ENCODE measurements at regions of chr15 and their contacts with region 1.

Region 1: DNA sequence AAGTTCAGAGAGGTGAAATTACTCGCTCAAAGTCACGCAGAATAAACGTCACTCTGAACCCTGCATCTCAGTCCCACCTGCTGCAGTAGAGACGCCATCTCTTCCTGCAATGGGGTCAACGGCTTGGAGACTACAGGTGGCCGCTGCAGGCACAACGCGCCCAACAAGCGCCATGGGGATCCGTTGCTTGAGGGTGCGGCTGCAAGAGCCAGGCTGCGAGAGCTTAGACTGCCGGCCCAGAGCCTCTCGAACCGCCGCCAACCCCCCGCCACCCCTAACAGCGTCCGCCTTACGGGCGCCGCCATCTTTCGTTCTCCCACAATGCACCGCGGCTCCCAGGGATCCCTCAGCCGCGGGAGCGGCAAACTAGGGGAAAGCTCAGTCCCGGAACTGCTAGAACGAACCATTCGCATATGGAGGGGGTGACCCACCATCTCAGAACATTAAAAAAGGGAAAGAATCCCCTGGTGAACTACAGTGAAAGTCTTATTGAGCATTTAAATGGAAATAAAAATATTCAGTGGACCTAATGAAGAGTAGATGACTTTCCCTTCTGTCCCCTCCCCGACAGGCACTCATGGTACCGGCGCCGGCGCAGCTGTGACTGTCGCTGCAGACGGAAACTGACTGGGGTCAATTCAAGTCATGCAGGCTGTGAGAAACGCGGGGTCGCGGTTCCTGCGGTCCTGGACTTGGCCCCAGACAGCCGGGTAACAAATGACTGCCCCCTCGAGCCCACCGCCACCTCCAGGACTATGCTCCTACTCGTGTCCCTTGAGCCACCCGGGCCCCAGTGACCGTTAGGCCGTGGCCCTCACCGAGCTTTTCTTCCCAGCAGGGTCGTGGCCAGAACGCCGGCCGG is at the starts of genes MRPL46 and MRPS11:
- DNase-seq: peak; percentile 89 to 93 (median 90)
- H3K4me3 ChIP-seq: peak within 1 kb of the TSS; percentile 87 to 90
- H3K4me3 Mint-ChIP-seq: peak within 1 kb of the TSS; percentile 96 to 99 (median 98)
- H3K27ac ChIP-seq: peak within 1 kb of the TSS; percentile 93
- H3K27ac Mint-ChIP-seq: peak within 1 kb of the TSS; percentile 98 to 100 (median 99)
- H3K4me1 ChIP-seq: peaks cover 29% of the 10 kb centered on the region
- H3K4me1 Mint-ChIP-seq: peaks cover 15 to 38% (median 30%) of the 10 kb centered on the region in 4 donors
- H3K27me3 ChIP-seq: no peaks in the 10 kb centered on the region
- H3K27me3 Mint-ChIP-seq: no peaks in the 10 kb centered on the region
- total RNA-seq, gene MRPL46: 25.9 to 28.7 TPM
- total RNA-seq, gene MRPS11: 27.5 to 35.0 TPM

Region 2: GRCh38 chr15:88454867-88455810 is 12.2 kb before region 1 on chr15:
- CTCF ChIA-PET with region 1: interaction called, 10 read pairs
- POLR2A ChIA-PET with region 1: interaction called, 11 read pairs
- intact Hi-C with region 1: no loop called
- DNase-seq: peak in 3 of 5 donors; percentile 18 to 20 (median 20)
- H3K4me3 ChIP-seq: no peak overlapping the region
- H3K4me3 Mint-ChIP-seq: no peak overlapping the region
- H3K27ac ChIP-seq: no peak overlapping the region
- H3K27ac Mint-ChIP-seq: peak overlapping the region in 1 of 7 donors; percentile 37
- H3K4me1 ChIP-seq: peaks cover 7% of the 10 kb centered on the region
- H3K4me1 Mint-ChIP-seq: peaks cover 0 to 1% (median under 1%) of the 10 kb centered on the region in 4 donors
- H3K27me3 ChIP-seq: no peaks in the 10 kb centered on the region
- H3K27me3 Mint-ChIP-seq: peaks cover 0 to under 1% of the 10 kb centered on the region in 2 donors

Region 3: GRCh38 chr15:88546248-88547129 is 79.2 kb after region 1 on chr15 and contains the start of gene DET1:
- CTCF ChIA-PET with region 1: no interaction called
- POLR2A ChIA-PET with region 1: no interaction called
- intact Hi-C with region 1: loop called (anchors 1 kb)
- DNase-seq: peak; percentile 92 to 97 (median 94)
- H3K4me3 ChIP-seq: peak within 1 kb of the TSS; percentile 34 to 63
- H3K4me3 Mint-ChIP-seq: peak within 1 kb of the TSS; percentile 92 to 95 (median 92)
- H3K27ac ChIP-seq: peak within 1 kb of the TSS; percentile 62
- H3K27ac Mint-ChIP-seq: peak within 1 kb of the TSS; percentile 86 to 97 (median 97)
- H3K4me1 ChIP-seq: peaks cover 9% of the 10 kb centered on the region
- H3K4me1 Mint-ChIP-seq: peaks cover 4 to 23% (median 8%) of the 10 kb centered on the region in 4 donors
- H3K27me3 ChIP-seq: no peaks in the 10 kb centered on the region
- H3K27me3 Mint-ChIP-seq: no peaks in the 10 kb centered on the region
- total RNA-seq, gene DET1: 11.5 to 11.7 TPM

Region 4: DNA sequence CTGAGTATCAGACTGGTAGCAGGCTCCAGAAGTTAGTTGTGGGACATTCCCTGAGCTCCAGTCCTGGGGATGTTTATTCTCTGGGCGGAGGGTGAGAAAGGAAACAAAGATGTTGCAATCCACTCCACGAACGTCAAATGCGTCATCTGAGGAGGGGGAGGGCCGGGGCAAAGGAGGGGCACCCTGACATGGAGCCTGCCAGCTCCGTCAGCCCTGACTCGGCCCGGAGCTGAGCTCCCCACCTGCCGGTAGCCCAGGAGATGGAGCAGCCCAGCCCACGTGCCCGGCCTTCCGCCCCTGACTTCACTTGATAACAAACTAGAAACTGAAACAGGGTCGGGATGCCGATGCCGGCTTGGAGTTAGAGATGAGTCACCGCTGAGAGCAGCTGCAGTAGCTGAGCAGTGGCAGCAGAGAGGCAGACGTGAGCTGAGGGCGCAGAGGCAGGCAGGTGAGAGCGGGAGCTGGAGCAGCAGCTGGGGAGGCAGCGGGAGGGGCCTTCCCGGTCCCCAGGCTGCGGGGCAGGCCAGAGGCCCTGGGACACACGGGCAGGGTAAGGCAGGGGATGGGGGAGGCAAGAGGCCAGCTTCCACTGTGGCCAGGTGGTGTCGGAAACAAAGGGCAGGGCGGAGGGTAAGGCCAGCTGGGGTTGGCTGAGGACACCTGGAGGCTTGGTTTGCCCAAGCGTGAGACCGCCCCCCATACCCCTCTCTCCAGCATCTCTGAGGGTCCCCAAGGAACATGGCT is 171.5 kb after region 1 on chr15 and contains the start of gene ISG20:
- CTCF ChIA-PET with region 1: interaction called, 3 read pairs
- POLR2A ChIA-PET with region 1: interaction called, 18 read pairs
- intact Hi-C with region 1: loop called (anchors 1 kb)
- DNase-seq: peak; percentile 97 to 100 (median 99)
- H3K4me3 ChIP-seq: peak within 1 kb of the TSS; percentile 55 to 94
- H3K4me3 Mint-ChIP-seq: peak within 1 kb of the TSS; percentile 88 to 98 (median 95)
- H3K27ac ChIP-seq: peak within 1 kb of the TSS; percentile 100
- H3K27ac Mint-ChIP-seq: peak within 1 kb of the TSS; percentile 89 to 100 (median 99)
- H3K4me1 ChIP-seq: peaks cover 96% of the 10 kb centered on the region
- H3K4me1 Mint-ChIP-seq: peaks cover 55 to 86% (median 74%) of the 10 kb centered on the region in 4 donors
- H3K27me3 ChIP-seq: no peaks in the 10 kb centered on the region
- H3K27me3 Mint-ChIP-seq: no peaks in the 10 kb centered on the region
- total RNA-seq, gene ISG20: 144 to 153 TPM

Region 5: DNA sequence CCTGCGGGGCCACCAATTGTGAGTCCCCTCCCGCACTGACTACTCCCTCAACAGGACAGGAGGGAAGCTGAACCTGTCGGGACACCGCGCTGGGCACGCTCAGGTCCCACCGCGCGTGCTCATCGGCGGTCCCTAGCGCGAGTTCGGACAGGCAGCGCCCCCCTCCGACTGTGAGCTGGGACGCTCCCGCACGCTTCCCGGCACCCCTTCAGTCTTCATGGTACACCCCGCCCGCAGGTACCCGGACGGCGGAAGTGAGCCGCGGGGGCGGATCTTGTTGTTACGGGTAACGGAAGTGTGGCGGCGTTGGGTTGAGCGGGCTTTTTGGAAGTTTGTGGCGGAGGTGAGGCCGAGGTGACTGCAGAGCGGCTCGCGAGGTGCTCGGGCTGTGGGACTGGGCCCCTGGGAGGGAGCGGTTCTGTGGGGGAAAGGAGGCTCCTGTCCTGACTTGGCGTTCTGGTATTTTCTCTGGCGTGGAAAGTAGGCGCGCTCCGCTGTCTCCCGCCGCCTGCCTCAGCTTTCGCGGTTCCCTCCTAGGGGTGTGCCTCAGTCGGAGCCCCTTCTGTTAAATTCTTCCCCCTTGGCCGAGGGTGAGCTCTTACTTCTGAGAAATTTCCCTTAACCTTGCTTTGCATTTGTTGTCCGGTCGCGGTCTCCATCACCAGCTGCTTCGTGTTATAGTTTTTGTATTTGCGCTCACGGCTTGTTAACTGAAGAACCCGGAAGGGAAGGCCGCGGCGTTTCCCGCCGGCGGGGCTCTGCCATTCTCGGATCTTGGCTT is 776.6 kb after region 1 on chr15 and contains the start of gene FANCI:
- CTCF ChIA-PET with region 1: no interaction called
- POLR2A ChIA-PET with region 1: interaction called, 4 read pairs
- intact Hi-C with region 1: loop called (anchors 5 kb)
- DNase-seq: peak; percentile 93 to 96 (median 94)
- H3K4me3 ChIP-seq: peak within 1 kb of the TSS; percentile 95
- H3K4me3 Mint-ChIP-seq: peak within 1 kb of the TSS; percentile 91 to 98 (median 94)
- H3K27ac ChIP-seq: peak within 1 kb of the TSS; percentile 43
- H3K27ac Mint-ChIP-seq: peak within 1 kb of the TSS; percentile 80 to 92 (median 89)
- H3K4me1 ChIP-seq: peaks cover 14% of the 10 kb centered on the region
- H3K4me1 Mint-ChIP-seq: peaks cover 20 to 40% (median 30%) of the 10 kb centered on the region in 4 donors
- H3K27me3 ChIP-seq: no peaks in the 10 kb centered on the region
- H3K27me3 Mint-ChIP-seq: no peaks in the 10 kb centered on the region
- total RNA-seq, gene FANCI: 10.9 to 19.0 TPM

Region 6: GRCh38 chr15:89334510-89335288 is 867.4 kb after region 1 on chr15 and contains the start of gene POLG:
- CTCF ChIA-PET with region 1: no interaction called
- POLR2A ChIA-PET with region 1: interaction called, 5 read pairs
- intact Hi-C with region 1: loop called (anchors 2 kb)
- DNase-seq: peak; percentile 99 to 100 (median 99)
- H3K4me3 ChIP-seq: peak within 1 kb of the TSS; percentile 81 to 92
- H3K4me3 Mint-ChIP-seq: peak within 1 kb of the TSS; percentile 90 to 100 (median 94)
- H3K27ac ChIP-seq: peak within 1 kb of the TSS; percentile 69
- H3K27ac Mint-ChIP-seq: peak within 1 kb of the TSS; percentile 88 to 100 (median 98)
- H3K4me1 ChIP-seq: peaks cover 54% of the 10 kb centered on the region
- H3K4me1 Mint-ChIP-seq: peaks cover 37 to 59% (median 47%) of the 10 kb centered on the region in 4 donors
- H3K27me3 ChIP-seq: no peaks in the 10 kb centered on the region
- H3K27me3 Mint-ChIP-seq: peaks cover 2 to 7% of the 10 kb centered on the region in 2 donors
- total RNA-seq, gene POLG: 148 to 151 TPM

Measured in CD4-positive, alpha-beta memory T cell (primary cell).